GM12878 (cell line): ENCODE measurements at regions of chr4 and their contacts with region 1.

Region 1: GRCh38 chr4:81663368-81663767 is 191.7 kb upstream of the RASGEF1B start:
- DNase-seq: no peak
- ATAC-seq: no peak
- H3K4me3 ChIP-seq: no peak overlapping the region
- H3K27ac ChIP-seq: no peak overlapping the region
- H3K4me1 ChIP-seq: no peaks in the 10 kb centered on the region
- H3K27me3 ChIP-seq: peaks cover 0 to 2% of the 10 kb centered on the region in 2 experiments; a peak in 3 of 4 replicates
- CTCF ChIP-seq: no peak
- EP300 ChIP-seq: no peak
- POLR2A ChIP-seq: no peak
- RAD21 ChIP-seq: no peak

Region 2: DNA sequence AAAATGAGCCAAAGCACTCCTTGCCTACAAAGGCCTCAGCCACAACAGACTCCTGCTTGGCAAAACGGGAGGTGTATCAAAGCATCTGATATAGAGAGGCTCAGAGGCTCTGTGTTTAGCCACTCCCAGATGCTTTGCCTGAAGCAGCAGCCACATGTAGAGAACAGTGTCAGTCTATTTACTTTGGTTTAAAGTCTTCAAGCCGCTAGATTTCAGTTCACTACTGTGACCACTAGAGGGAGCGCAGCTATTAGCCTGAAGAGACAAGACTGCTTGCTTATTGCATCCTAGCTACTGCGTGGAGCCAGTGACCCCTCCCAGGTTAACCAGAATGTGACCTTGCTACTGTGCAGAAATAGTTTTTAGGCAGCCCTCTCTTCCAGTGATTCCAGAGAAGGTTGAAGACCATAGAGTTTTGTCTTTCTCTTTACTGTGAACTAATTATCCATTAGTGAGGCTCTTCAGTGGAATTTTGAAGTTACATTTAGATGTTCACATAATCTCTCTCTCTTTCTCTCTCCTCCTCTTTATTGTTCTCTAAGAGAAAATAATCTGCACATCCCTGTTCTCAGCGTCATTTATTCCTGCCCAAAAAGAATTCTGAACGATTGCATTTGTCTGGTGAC is 593.5 kb before region 1 on chr4:
- CTCF ChIA-PET with region 1: no interaction called
- POLR2A ChIA-PET with region 1: no interaction called
- RAD21 ChIA-PET with region 1: no interaction called
- SMC1A ChIA-PET with region 1: no interaction called
- in situ Hi-C with region 1: no loop called
- intact Hi-C with region 1: no loop called
- DNase-seq: peak; percentile 32
- ATAC-seq: peak; percentile 96
- H3K4me3 ChIP-seq: no peak overlapping the region
- H3K27ac ChIP-seq: no peak overlapping the region
- H3K4me1 ChIP-seq: no peaks in the 10 kb centered on the region
- H3K27me3 ChIP-seq: 0 out of 4 replicates have a peak, but pooled peaks cover 0 to 2% of the 10 kb centered on the region in 2 experiments
- CTCF ChIP-seq: peak; percentile 80 to 93 (median 93)
- EP300 ChIP-seq: no peak
- POLR2A ChIP-seq: no peak
- RAD21 ChIP-seq: peak; percentile 80

Region 3: DNA sequence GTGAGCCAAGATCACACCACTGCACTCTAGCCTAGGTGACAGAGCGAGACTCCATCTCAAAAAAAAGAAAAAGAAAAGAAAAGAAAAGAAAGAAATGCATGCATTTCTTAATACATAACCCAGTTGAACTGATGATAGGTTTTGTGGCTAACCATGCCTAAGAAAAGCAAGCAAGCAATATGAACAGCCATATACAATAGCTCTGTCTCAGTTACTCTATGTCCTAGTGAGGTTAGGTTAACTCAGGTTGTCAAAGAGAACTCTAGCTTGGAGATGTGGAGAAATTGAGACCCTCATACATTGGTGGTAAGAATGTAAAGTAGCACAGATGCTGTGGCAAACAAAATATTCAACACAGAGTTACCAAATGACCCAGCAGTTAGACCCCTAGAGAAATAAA is 24.7 kb before region 1 on chr4:
- CTCF ChIA-PET with region 1: no interaction called
- POLR2A ChIA-PET with region 1: no interaction called
- RAD21 ChIA-PET with region 1: no interaction called
- SMC1A ChIA-PET with region 1: no interaction called
- in situ Hi-C with region 1: no loop called
- intact Hi-C with region 1: loop called (anchors 1 kb)
- DNase-seq: no peak
- ATAC-seq: no peak
- H3K4me3 ChIP-seq: no peak overlapping the region
- H3K27ac ChIP-seq: no peak overlapping the region
- H3K4me1 ChIP-seq: no peaks in the 10 kb centered on the region
- H3K27me3 ChIP-seq: no peaks in the 10 kb centered on the region
- CTCF ChIP-seq: no peak
- EP300 ChIP-seq: no peak
- POLR2A ChIP-seq: no peak
- RAD21 ChIP-seq: no peak

Region 4: DNA sequence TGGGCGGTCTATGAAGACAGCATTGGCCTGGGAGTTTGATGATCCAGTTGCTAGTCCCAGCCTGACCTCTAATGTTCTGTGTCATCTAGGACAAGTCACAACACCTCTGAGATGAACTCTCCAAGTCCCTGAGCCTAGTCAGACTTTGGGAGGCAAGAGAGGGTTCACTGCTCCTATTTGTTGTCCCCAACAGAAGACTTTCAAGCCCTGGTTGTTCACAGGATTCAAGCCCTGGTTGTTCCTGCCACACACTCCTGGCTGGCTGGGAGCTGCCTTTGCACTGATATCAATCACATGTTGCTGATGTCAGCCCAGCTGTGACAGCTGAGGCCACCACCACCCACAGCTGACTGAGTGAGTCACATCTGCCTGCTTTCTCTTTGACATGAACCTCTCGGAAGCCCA is 61.6 kb after region 1 on chr4:
- CTCF ChIA-PET with region 1: no interaction called
- POLR2A ChIA-PET with region 1: no interaction called
- RAD21 ChIA-PET with region 1: no interaction called
- SMC1A ChIA-PET with region 1: no interaction called
- in situ Hi-C with region 1: no loop called
- intact Hi-C with region 1: no loop called
- DNase-seq: peak; percentile 3
- ATAC-seq: peak; percentile 68
- H3K4me3 ChIP-seq: no peak overlapping the region
- H3K27ac ChIP-seq: no peak overlapping the region
- H3K4me1 ChIP-seq: no peaks in the 10 kb centered on the region
- H3K27me3 ChIP-seq: no peaks in the 10 kb centered on the region; a peak in 1 of 4 replicates
- CTCF ChIP-seq: no peak
- EP300 ChIP-seq: no peak
- POLR2A ChIP-seq: no peak
- RAD21 ChIP-seq: no peak